Naive thymus-derived CD4-positive, alpha-beta T cell (primary cell): ENCODE measurements at regions of chr20 and their contacts with region 1.

Region 1: GRCh38 chr20:18507218-18508021 is at the start of gene SEC23B:
- DNase-seq: peak; percentile 88 to 100 (median 99)
- ATAC-seq: peak; percentile 91
- H3K4me3 ChIP-seq: peak within 1 kb of the TSS; percentile 74
- H3K4me3 Mint-ChIP-seq: peak within 1 kb of the TSS; percentile 91 to 100 (median 100)
- H3K27ac ChIP-seq: peak within 1 kb of the TSS; percentile 90
- H3K27ac Mint-ChIP-seq: peak within 1 kb of the TSS; percentile 99 to 100 (median 100)
- H3K4me1 ChIP-seq: peaks cover 17 to 28% of the 10 kb centered on the region in 2 donors
- H3K4me1 Mint-ChIP-seq: peaks cover 25 to 59% (median 50%) of the 10 kb centered on the region in 7 donors
- H3K27me3 ChIP-seq: no peaks in the 10 kb centered on the region
- H3K27me3 Mint-ChIP-seq: peaks cover 0 to 2% (median 0%) of the 10 kb centered on the region in 5 donors
- total RNA-seq, gene SEC23B: 39.0 to 102 (median 40.9) TPM

Region 2: DNA sequence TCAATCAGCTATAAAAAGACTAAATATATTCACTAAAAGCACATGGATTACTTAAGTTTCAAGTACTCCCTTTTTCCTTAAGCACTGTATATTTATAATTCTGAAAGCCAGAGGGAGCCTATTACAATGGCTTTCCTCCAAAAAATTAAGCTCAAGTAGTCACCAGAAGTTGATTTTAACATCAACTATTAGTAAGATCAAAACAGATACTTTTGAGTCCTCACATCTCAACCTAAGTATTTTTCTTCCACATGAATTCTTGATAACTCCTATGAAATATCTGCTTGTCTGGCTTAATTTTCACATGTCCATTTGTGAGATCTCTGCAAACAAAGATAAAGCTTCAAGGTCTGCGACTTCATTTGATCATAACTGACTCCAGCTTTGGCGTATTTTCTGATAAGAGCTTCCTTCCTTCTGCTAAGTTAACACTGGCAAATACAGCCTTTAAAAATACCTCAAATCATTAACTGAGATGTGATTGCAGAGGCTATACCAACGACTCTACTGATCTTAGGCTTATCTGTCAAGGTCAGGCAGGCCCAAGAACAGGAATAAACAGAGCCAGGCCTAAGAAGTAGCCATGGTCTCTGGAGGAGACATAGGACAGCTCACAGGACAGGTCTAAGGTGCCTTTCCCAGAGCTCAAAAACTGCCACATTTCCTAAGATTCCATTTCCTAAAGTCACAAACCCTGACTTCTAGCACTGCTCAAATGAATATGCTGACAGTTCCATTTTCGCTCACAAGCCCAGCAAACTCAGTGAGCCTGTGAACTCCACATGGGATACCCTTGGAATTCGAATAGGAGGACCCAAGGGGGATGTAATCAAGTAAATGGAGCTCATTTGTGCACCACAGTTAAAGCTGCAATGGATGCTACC is 548.8 kb before region 1 on chr20:
- CTCF ChIA-PET with region 1: no interaction called
- POLR2A ChIA-PET with region 1: no interaction called
- intact Hi-C with region 1: loop called in 1 of 2 experiments (anchors 1 kb)
- DNase-seq: no peak
- ATAC-seq: no peak
- H3K4me3 ChIP-seq: no peak overlapping the region
- H3K4me3 Mint-ChIP-seq: peak overlapping the region in 5 of 10 donors; percentile 14 to 62 (median 49)
- H3K27ac ChIP-seq: peak overlapping the region; percentile 1
- H3K27ac Mint-ChIP-seq: peak overlapping the region in 5 of 9 donors; percentile 18 to 83 (median 60)
- H3K4me1 ChIP-seq: peaks cover 30 to 40% of the 10 kb centered on the region in 2 donors
- H3K4me1 Mint-ChIP-seq: peaks cover 50 to 82% (median 75%) of the 10 kb centered on the region in 7 donors
- H3K27me3 ChIP-seq: no peaks in the 10 kb centered on the region
- H3K27me3 Mint-ChIP-seq: no peaks in the 10 kb centered on the region

Region 3: GRCh38 chr20:18412221-18412901 is 95.1 kb before region 1 on chr20:
- CTCF ChIA-PET with region 1: no interaction called
- POLR2A ChIA-PET with region 1: no interaction called
- intact Hi-C with region 1: loop called (anchors 1 kb)
- DNase-seq: no peak
- ATAC-seq: peak; percentile 33
- H3K4me3 ChIP-seq: no peak overlapping the region
- H3K4me3 Mint-ChIP-seq: no peak overlapping the region
- H3K27ac ChIP-seq: no peak overlapping the region
- H3K27ac Mint-ChIP-seq: no peak overlapping the region
- H3K4me1 ChIP-seq: no peaks in the 10 kb centered on the region
- H3K4me1 Mint-ChIP-seq: peaks cover 0 to 7% (median 3%) of the 10 kb centered on the region in 7 donors
- H3K27me3 ChIP-seq: no peaks in the 10 kb centered on the region
- H3K27me3 Mint-ChIP-seq: no peaks in the 10 kb centered on the region

Region 4: DNA sequence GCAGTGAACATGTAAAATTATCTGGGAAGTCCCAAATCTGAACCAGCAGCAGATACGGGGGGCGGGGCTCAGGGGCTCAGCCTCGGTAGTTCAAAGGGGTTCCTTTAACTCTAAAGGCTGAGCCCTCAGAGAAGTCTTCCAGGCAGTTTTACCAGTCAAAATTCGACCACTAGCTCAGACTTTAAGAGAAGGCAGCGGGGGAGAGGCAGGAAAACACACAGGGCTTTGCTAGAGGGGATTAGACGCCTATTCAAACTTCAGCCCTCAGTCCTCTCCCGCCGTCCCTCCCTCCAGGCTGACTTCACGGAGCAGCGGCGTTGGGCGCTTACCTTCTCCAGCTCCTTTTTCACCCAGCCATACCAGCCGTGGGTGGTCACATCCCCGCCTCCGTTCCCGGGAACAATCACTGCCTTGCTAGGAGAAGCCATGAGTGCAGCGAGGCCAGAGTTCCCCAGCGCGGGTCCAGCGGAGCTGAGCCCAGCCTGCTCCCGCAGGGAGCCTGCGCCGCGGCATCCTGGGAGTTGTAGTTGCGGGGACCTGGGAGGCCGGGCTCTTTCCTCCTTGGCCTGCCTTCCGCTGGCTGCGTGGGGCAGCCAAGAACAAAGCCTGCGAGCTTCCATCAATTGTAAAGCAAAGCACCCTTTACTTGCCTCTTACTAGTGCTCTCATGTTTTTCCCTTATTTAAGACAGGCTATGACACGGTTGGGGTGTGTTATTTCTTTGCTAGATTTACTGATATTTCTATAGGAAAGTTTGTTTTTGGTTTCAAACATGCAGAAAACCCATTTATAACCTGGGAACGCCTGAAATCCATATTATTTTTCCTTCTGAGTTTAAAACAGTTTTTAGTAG is 10.5 kb before region 1 on chr20 and contains the start of gene RBBP9:
- CTCF ChIA-PET with region 1: interaction called, 22 read pairs
- POLR2A ChIA-PET with region 1: interaction called, 110 read pairs
- intact Hi-C with region 1: loop called (anchors 1 kb)
- DNase-seq: peak; percentile 58 to 77 (median 68)
- ATAC-seq: peak; percentile 98
- H3K4me3 ChIP-seq: peak within 1 kb of the TSS; percentile 98
- H3K4me3 Mint-ChIP-seq: peak within 1 kb of the TSS; percentile 92 to 99 (median 96)
- H3K27ac ChIP-seq: peak within 1 kb of the TSS; percentile 91
- H3K27ac Mint-ChIP-seq: peak within 1 kb of the TSS; percentile 62 to 96 (median 94)
- H3K4me1 ChIP-seq: peaks cover 5 to 7% of the 10 kb centered on the region in 2 donors
- H3K4me1 Mint-ChIP-seq: peaks cover 10 to 25% (median 22%) of the 10 kb centered on the region in 7 donors
- H3K27me3 ChIP-seq: no peaks in the 10 kb centered on the region
- H3K27me3 Mint-ChIP-seq: peaks cover 0 to 3% (median 3%) of the 10 kb centered on the region in 5 donors
- total RNA-seq, gene RBBP9: 4.9 to 16.4 (median 6.1) TPM

Region 5: DNA sequence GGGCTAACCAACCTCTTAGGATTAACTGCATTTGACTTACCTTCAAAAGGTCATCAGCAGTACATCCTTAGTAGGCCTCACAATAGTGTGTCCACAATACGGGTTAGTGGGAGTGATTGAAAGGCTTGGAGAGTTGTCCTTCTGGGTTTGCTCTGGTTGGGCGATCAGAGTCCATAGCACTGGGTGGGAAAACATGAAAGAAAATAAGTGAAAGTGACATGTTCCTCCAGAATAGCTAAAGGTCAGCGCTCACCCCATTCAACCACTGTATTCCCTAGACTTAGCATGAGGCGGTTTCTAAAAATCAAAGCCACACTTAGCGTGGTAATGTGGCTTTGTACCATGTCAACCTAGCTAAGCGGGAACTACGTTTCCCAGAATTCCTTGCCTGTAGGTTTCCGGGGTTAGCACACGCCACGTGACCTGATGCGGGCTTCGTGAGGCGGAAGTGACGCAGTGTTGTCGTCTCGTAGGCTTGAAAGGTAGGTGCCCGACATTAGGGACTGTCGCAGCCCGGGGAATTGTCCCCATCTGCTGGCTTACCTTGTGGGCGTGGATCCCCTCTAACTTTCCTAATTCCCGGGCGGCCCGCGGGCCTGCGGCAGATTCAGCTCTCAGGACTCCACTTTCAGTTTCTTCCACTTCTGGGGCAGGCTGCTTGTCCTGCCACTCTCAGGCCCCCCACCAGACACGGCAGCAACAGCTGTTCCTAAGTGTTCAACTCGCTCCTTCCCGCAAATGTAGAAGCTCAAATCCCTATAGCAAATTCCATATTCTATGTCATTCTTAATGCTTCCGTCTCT is 286.4 kb after region 1 on chr20:
- CTCF ChIA-PET with region 1: no interaction called
- POLR2A ChIA-PET with region 1: interaction called, 12 read pairs
- intact Hi-C with region 1: loop called (anchors 1 kb)
- DNase-seq: peak; percentile 62 to 94 (median 87)
- ATAC-seq: peak; percentile 99
- H3K4me3 ChIP-seq: peak overlapping the region; percentile 87
- H3K4me3 Mint-ChIP-seq: peak overlapping the region; percentile 85 to 99 (median 96)
- H3K27ac ChIP-seq: peak overlapping the region; percentile 92
- H3K27ac Mint-ChIP-seq: peak overlapping the region; percentile 97 to 100 (median 99)
- H3K4me1 ChIP-seq: peaks cover 8% of the 10 kb centered on the region in 2 donors
- H3K4me1 Mint-ChIP-seq: peaks cover 0 to 24% (median 18%) of the 10 kb centered on the region in 7 donors
- H3K27me3 ChIP-seq: no peaks in the 10 kb centered on the region
- H3K27me3 Mint-ChIP-seq: peaks cover 11 to 26% (median 21%) of the 10 kb centered on the region in 5 donors